ENCODE measurements at regions of chr3 and their contacts with region 1.

Region 1: DNA sequence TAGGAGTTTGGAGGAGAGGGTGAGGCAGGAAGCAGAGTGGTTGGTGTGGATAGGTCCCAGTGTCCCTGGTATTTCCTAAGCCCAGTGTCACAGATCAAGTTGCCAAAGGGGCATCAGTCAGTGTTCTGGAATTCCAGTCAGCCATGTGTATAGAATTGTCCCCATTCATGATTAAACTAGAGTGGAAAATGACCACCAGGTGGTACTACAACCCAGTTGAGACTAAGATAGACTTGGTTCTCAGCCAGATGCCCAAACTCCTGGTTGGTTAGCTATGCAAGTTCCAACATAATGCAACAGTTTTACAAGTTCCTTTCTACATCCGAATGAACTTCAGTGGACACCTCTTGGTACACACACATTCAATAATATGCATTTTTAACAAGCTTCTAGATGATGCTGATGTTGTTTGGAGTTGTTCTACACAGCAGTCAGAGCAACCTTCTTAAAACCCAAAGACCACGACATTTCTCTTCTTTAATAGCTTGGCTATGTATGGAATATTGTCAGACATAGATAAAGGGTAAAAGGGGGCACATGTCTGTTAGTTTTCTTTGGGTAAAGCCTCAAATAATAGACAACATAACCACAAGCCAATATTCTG is 8.4 kb upstream of the ATR start:
- DNase-seq: peak; percentile 66
- H3K4me3 ChIP-seq: no peak overlapping the region
- H3K27ac ChIP-seq: no peak overlapping the region
- H3K4me1 ChIP-seq: no peaks in the 10 kb centered on the region
- CTCF ChIP-seq: peak; percentile 81

Region 2: GRCh38 chr3:142566096-142566495 is 20.8 kb before region 1 on chr3:
- CTCF ChIA-PET with region 1: no interaction called
- POLR2A ChIA-PET with region 1: no interaction called
- intact Hi-C with region 1: no loop called
- DNase-seq: no peak
- H3K4me3 ChIP-seq: no peak overlapping the region
- H3K27ac ChIP-seq: no peak overlapping the region
- H3K4me1 ChIP-seq: no peaks in the 10 kb centered on the region
- CTCF ChIP-seq: no peak

Region 3: DNA sequence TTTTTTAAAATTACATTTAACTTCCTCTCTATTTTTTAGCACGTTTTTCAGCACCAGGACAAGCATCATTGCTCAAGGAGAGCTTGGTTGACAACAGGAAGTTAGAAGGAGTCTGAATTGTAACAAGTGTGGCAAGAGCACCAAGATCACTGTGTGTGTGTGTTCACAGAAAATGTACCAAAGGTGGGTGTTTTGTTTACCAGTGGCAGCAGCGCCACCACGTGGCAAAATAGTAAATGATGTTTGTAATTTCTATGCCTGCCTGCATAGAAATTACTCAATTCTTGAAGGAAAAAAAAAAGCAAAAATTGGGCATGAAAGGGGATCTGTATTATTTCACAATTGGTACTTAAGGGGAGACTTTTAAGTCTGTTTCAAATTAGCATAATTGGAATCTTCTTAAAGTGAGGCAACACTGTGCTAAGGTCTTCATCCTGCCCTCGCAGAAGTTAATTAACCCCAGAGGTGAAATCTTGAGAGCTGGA is 407.1 kb after region 1 on chr3:
- CTCF ChIA-PET with region 1: no interaction called
- POLR2A ChIA-PET with region 1: no interaction called
- intact Hi-C with region 1: loop called (anchors 2 kb)
- DNase-seq: peak; percentile 84
- H3K4me3 ChIP-seq: no peak overlapping the region
- H3K27ac ChIP-seq: no peak overlapping the region
- H3K4me1 ChIP-seq: peaks cover 11% of the 10 kb centered on the region
- CTCF ChIP-seq: peak; percentile 93

Measured in OCI-LY7 (cell line).